Transverse colon (tissue), 4 donors: ENCODE measurements at regions of chr13 and their contacts with region 1.

Region 1: DNA sequence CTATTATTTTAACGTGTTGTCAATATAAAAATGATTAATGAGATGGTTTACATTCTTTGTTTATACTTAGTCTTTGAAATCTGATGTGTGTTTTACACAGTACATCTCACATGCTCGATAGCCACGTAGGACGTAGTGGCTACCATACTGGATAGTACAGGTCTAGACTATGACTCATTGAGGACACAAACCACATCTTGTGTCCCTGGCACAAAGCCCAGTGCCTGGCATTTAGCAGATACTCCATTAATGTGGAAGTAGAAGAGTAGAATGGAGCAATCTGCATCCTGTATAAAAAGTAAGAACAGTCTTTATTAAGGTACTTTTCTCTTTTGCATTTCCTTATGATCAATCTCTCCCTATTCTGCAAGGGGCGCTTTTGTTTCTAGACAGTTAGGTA is 49.0 kb upstream of the FRY start:
- DNase-seq: peak; percentile 45
- H3K4me3 ChIP-seq: no peak overlapping the region
- H3K27ac ChIP-seq: no peak overlapping the region
- H3K4me1 ChIP-seq: no peaks in the 10 kb centered on the region
- H3K27me3 ChIP-seq: no peaks in the 10 kb centered on the region
- CTCF ChIP-seq: no peak
- EP300 ChIP-seq: no peak
- POLR2A ChIP-seq: no peak

Region 2: GRCh38 chr13:32045982-32046785 is 63.6 kb after region 1 on chr13:
- in situ Hi-C with region 1: no loop called
- intact Hi-C with region 1: no loop called
- DNase-seq: no peak
- H3K4me3 ChIP-seq: no peak overlapping the region
- H3K27ac ChIP-seq: peak overlapping the region; percentile 5 to 74 (median 44)
- H3K4me1 ChIP-seq: peaks cover 0 to 27% (median 15%) of the 10 kb centered on the region in 4 donors
- H3K27me3 ChIP-seq: no peaks in the 10 kb centered on the region
- CTCF ChIP-seq: no peak
- EP300 ChIP-seq: no peak
- POLR2A ChIP-seq: no peak

Region 3: GRCh38 chr13:32086366-32086765 is 103.8 kb after region 1 on chr13:
- in situ Hi-C with region 1: loop called in 1 of 4 experiments (anchors 25 kb)
- intact Hi-C with region 1: no loop called
- DNase-seq: no peak
- H3K4me3 ChIP-seq: no peak overlapping the region
- H3K27ac ChIP-seq: peak overlapping the region in 3 of 4 donors; percentile 23 to 54 (median 44)
- H3K4me1 ChIP-seq: peaks cover 0 to 7% (median 2%) of the 10 kb centered on the region in 4 donors
- H3K27me3 ChIP-seq: no peaks in the 10 kb centered on the region
- CTCF ChIP-seq: no peak
- EP300 ChIP-seq: no peak
- POLR2A ChIP-seq: no peak

Region 4: DNA sequence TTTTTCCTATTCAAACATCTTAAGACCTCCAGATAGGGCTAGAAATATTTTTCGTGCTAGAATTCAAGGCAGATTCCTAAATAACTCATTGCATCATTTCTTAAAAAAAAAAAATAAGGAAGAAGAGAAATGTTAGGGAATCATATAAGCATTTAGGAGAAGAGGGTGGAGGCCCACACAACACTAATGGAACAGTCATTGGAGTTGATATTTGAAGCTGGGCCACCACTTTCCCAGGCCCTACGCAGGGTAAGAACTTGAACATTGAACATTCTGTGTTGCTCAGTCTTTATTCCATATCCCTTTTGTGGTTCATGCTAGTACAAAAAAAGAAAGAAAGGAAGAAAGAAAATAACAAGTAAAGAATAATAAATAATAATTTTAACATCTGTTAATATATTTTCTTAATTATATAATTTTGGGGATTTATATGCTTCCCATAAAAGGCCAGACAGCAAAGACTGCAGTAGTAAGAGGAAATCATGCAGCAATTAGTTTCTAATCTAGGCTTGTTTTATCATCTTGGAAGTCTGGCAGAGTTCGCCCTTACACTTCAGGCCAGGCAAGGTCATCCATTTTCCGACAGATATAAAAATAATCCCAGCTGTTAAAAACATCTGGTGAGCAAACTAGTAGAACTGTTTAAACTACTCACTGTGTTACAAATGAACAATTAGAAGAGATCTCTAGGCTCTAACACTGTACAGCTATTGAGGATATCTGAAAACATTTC is 176.8 kb after region 1 on chr13:
- in situ Hi-C with region 1: no loop called
- intact Hi-C with region 1: no loop called
- DNase-seq: no peak
- H3K4me3 ChIP-seq: no peak overlapping the region
- H3K27ac ChIP-seq: peak overlapping the region in 1 of 4 donors; percentile 23
- H3K4me1 ChIP-seq: no peaks in the 10 kb centered on the region
- H3K27me3 ChIP-seq: no peaks in the 10 kb centered on the region
- CTCF ChIP-seq: no peak
- EP300 ChIP-seq: no peak
- POLR2A ChIP-seq: no peak